HAP-1 (cell line): ENCODE measurements at regions of chr17 and their contacts with region 1.

Region 1: GRCh38 chr17:14630046-14630445 is 329.2 kb downstream of the HS3ST3B1 start:
- DNase-seq: no peak
- H3K4me3 ChIP-seq: no peak overlapping the region
- H3K4me1 ChIP-seq: no peaks in the 10 kb centered on the region
- H3K27me3 ChIP-seq: no peaks in the 10 kb centered on the region

Region 2: DNA sequence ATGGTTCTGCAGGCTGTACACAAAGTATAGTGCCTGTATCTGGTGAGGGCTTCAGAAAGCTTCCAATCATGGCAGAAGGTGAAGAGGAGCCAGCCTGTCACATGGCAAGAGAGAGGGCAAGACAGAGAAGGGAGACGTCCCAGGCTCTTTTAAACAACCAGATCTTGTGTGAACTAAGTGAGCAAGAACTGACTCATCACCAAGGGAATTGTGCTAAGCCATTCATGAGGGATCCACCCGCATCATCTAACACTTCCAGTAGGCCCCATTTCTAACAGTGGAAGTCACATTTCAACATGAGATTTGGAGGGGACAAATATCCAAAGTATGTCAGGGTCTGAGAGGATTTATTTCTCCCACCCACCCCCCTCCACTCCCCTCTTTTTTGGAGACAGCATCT is 1556.0 kb before region 1 on chr17:
- in situ Hi-C with region 1: no loop called
- DNase-seq: no peak
- H3K4me3 ChIP-seq: no peak overlapping the region
- H3K4me1 ChIP-seq: no peaks in the 10 kb centered on the region
- H3K27me3 ChIP-seq: no peaks in the 10 kb centered on the region

Region 3: DNA sequence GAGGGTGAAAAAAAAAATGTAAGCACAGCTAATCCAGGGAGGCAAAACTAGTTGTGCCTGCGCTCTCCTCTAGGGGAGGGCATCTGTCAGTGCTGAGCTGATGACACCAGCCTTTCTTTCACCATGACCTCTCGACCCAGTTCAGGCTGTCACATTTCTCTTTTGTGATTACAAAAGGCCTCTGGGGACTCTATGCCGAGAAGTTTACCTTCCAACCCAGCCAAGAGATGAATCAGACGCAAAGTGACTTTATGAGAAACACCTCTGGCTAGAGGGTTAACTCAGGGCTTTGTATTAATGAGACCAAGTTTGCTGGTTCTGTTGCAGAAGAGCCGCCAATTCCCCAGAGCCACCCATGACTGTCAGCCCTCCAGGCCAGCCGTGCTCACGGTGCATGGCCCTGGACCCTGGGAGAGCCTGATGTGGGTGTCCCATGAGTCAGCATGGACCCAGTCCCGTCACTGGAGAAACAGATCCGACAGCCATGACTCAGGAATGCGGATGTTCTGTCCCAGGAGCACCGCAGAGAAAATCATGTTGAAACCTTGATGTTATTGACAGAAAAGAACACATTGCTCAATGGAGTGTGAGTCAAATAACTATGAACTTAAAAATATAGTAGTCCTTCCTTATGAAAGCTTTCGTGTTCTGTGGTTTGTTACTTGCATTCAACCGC is 108.1 kb after region 1 on chr17:
- in situ Hi-C with region 1: loop called (anchors 25 kb)
- DNase-seq: no peak
- H3K4me3 ChIP-seq: no peak overlapping the region
- H3K4me1 ChIP-seq: no peaks in the 10 kb centered on the region
- H3K27me3 ChIP-seq: no peaks in the 10 kb centered on the region